ENCODE measurements at regions of chr6 and their contacts with region 1.

Region 1: GRCh38 chr6:29907637-29908340 is 34.5 kb upstream of the HLA-A start:
- DNase-seq: no peak
- H3K4me3 ChIP-seq: no peak overlapping the region
- H3K27ac ChIP-seq: no peak overlapping the region
- H3K4me1 ChIP-seq: no peaks in the 10 kb centered on the region
- H3K27me3 ChIP-seq: peaks cover 19 to 35% of the 10 kb centered on the region in 2 experiments
- CTCF ChIP-seq: no peak
- POLR2A ChIP-seq: no peak

Region 2: GRCh38 chr6:29865631-29866030 is 42.2 kb before region 1 on chr6:
- CTCF ChIA-PET with region 1: no interaction called
- POLR2A ChIA-PET with region 1: no interaction called
- dilution Hi-C with region 1: no loop called
- intact Hi-C with region 1: loop called (anchors 5 kb)
- DNase-seq: no peak
- H3K4me3 ChIP-seq: no peak overlapping the region
- H3K27ac ChIP-seq: no peak overlapping the region
- H3K4me1 ChIP-seq: no peaks in the 10 kb centered on the region
- H3K27me3 ChIP-seq: peaks cover 18 to 27% of the 10 kb centered on the region in 2 experiments
- CTCF ChIP-seq: no peak
- POLR2A ChIP-seq: no peak